Sigmoid colon (tissue), 7 donors: ENCODE measurements at regions of chr12 and their contacts with region 1.

Region 1: GRCh38 chr12:50572271-50572670 is 67.5 kb downstream of the DIP2B start:
- DNase-seq: no peak
- H3K4me3 ChIP-seq: no peak overlapping the region
- H3K27ac ChIP-seq: peak overlapping the region in 3 of 4 donors; percentile 31 to 59 (median 36)
- H3K4me1 ChIP-seq: peaks cover 0 to 71% (median 65%) of the 10 kb centered on the region in 4 donors
- H3K27me3 ChIP-seq: no peaks in the 10 kb centered on the region
- CTCF ChIP-seq: no peak
- EP300 ChIP-seq: no peak
- POLR2A ChIP-seq: no peak

Region 2: GRCh38 chr12:50637870-50638481 is 65.7 kb after region 1 on chr12:
- intact Hi-C with region 1: loop called (anchors 5 kb)
- DNase-seq: no peak
- H3K4me3 ChIP-seq: no peak overlapping the region
- H3K27ac ChIP-seq: no peak overlapping the region
- H3K4me1 ChIP-seq: peaks cover 0 to 19% (median 8%) of the 10 kb centered on the region in 4 donors
- H3K27me3 ChIP-seq: no peaks in the 10 kb centered on the region
- CTCF ChIP-seq: peak; percentile 39 to 54 (median 52)
- EP300 ChIP-seq: no peak
- POLR2A ChIP-seq: no peak